ENCODE measurements at regions of chr14 and their contacts with region 1.

Region 1: GRCh38 chr14:94136575-94137331 is 7.3 kb upstream of the IFI27L2 start:
- DNase-seq: no peak
- H3K4me3 ChIP-seq: no peak overlapping the region
- CTCF ChIP-seq: peak; percentile 96

Region 2: DNA sequence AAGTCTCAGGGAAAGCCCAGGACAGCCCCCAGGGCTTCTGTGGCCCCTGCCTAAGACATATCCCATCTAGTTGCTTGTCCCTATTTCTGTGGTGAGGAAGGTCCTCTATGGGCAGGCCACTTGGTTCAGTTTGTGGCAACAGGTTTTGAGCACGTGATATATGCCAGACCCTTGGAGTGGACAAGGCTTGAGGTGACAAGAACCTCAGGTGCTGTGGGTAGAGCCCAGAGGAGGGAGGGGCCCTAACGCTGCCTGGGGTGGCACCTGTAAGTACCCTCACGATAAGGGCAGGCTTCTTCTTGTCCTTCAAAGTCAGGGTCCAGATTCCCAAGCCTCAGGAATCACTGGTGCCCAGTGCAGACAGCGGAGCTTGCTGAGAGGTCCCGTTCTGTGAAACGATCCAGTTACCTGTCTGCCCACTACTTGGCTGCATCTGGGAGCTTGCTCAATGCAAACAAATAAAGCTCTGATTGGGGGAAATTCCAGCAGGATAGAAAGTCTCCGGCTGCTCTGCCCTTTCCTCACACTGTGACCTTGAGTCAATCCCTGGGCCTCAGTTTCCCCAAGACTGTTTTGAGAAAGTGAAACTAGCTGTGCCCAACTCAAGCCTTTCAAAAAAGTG is 257.3 kb before region 1 on chr14:
- CTCF ChIA-PET with region 1: no interaction called
- POLR2A ChIA-PET with region 1: no interaction called
- DNase-seq: no peak
- H3K4me3 ChIP-seq: no peak overlapping the region
- CTCF ChIP-seq: no peak

Region 3: GRCh38 chr14:94021001-94021400 is 115.8 kb before region 1 on chr14:
- CTCF ChIA-PET with region 1: interaction called, 13 read pairs
- POLR2A ChIA-PET with region 1: no interaction called
- DNase-seq: no peak
- H3K4me3 ChIP-seq: no peak overlapping the region
- CTCF ChIP-seq: no peak

Region 4: GRCh38 chr14:94041551-94042346 is 95.0 kb before region 1 on chr14:
- CTCF ChIA-PET with region 1: interaction called, 348 read pairs
- POLR2A ChIA-PET with region 1: no interaction called
- DNase-seq: peak; percentile 23
- H3K4me3 ChIP-seq: no peak overlapping the region
- CTCF ChIP-seq: no peak

Region 5: GRCh38 chr14:94100847-94101246 is 35.9 kb before region 1 on chr14:
- CTCF ChIA-PET with region 1: interaction called, 15 read pairs
- POLR2A ChIA-PET with region 1: no interaction called
- DNase-seq: peak; percentile 45
- H3K4me3 ChIP-seq: no peak overlapping the region
- CTCF ChIP-seq: no peak

Region 6: GRCh38 chr14:94161981-94162380 is 25.2 kb after region 1 on chr14:
- CTCF ChIA-PET with region 1: interaction called, 11 read pairs
- POLR2A ChIA-PET with region 1: no interaction called
- DNase-seq: no peak
- H3K4me3 ChIP-seq: no peak overlapping the region
- CTCF ChIP-seq: no peak

Region 7: GRCh38 chr14:94485944-94486841 is 349.4 kb after region 1 on chr14:
- CTCF ChIA-PET with region 1: interaction called, 26 read pairs
- POLR2A ChIA-PET with region 1: no interaction called
- DNase-seq: no peak
- H3K4me3 ChIP-seq: no peak overlapping the region; the same call in 1 of the 2 replicates
- CTCF ChIP-seq: peak; percentile 98